ENCODE measurements at regions of chr3 and their contacts with region 1.

Region 1: DNA sequence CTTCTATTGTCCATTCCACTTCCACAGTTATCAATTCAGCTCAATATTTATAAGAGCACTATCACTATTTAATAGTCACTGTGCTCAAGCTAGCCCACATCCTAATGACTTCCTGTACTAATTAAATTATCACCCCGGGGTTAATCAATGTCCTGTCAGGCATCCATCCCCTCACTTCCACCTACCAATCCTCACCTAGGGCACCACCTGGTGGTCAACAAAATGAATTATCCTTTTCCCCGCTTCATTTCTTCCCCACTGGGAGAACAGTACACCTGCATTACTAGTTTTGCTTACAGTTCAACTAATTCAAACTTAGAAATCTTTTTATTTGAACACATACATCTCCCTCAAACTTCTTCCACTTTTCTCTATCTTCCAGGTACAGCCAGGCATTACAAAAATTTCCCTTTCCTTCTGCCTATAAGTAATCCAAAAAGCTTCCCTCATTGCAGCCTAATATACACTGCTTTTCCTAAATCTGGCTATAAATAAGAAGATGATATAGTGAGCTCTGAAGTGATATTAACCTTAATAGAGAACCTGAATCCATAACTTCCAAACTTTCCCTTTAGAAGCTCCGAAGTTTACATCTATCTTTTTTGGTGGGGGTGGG is 68.5 kb downstream of the TMCC1 start:
- DNase-seq: peak; percentile 44
- H3K4me3 Mint-ChIP-seq: no peak overlapping the region
- H3K27ac Mint-ChIP-seq: no peak overlapping the region
- H3K4me1 Mint-ChIP-seq: peaks cover 15% of the 10 kb centered on the region
- H3K27me3 Mint-ChIP-seq: no peaks in the 10 kb centered on the region

Region 2: GRCh38 chr3:129383292-129383860 is 441.7 kb before region 1 on chr3:
- CTCF ChIA-PET with region 1: interaction called, 3 read pairs
- POLR2A ChIA-PET with region 1: no interaction called
- intact Hi-C with region 1: loop called (anchors 5 kb)
- DNase-seq: peak; percentile 61
- H3K4me3 Mint-ChIP-seq: no peak overlapping the region
- H3K27ac Mint-ChIP-seq: no peak overlapping the region
- H3K4me1 Mint-ChIP-seq: no peaks in the 10 kb centered on the region
- H3K27me3 Mint-ChIP-seq: no peaks in the 10 kb centered on the region

Region 3: DNA sequence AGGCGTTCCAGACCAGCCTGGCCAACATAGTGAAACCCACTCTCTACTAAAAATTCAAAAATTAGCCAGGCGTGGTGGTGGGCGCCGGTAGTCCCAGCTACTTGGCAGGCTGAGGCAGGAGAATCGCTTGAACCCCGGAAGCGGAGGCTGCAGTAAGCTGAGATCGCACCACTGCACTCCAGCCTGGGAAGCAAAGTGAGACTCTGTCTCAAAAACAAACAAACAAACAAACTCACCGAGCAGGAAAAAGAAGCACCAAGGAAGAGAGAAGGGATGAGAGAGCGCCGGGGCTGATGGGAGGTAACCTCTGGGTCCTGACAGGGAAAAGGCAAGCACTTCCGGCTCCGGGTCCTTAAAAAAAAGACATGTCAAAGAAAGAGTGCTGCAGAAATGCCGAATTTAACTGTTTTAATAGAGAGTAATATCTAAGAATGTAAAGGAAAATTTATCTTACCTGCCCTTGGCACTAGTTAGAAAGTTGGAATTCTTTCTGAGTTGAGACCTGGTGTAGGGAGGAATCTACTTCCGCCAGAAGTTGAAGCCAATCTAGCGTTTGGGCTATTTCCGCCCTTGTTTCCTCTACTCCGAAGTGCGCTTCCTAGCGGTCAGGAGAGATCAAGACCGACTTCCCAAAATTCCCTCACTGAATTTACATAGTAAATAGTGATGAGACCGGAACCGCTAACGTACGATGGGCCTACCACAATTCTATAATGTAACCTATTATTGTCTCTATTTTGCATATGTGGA is 425.7 kb before region 1 on chr3:
- CTCF ChIA-PET with region 1: no interaction called
- POLR2A ChIA-PET with region 1: no interaction called
- intact Hi-C with region 1: loop called (anchors 5 kb)
- DNase-seq: peak; percentile 82
- H3K4me3 Mint-ChIP-seq: peak overlapping the region; percentile 97
- H3K27ac Mint-ChIP-seq: peak overlapping the region; percentile 99
- H3K4me1 Mint-ChIP-seq: peaks cover 31% of the 10 kb centered on the region
- H3K27me3 Mint-ChIP-seq: no peaks in the 10 kb centered on the region

Region 4: GRCh38 chr3:129490242-129491045 is 334.6 kb before region 1 on chr3:
- CTCF ChIA-PET with region 1: interaction called, 22 read pairs
- POLR2A ChIA-PET with region 1: no interaction called
- intact Hi-C with region 1: loop called (anchors 1 kb)
- DNase-seq: peak; percentile 65
- H3K4me3 Mint-ChIP-seq: no peak overlapping the region
- H3K27ac Mint-ChIP-seq: no peak overlapping the region
- H3K4me1 Mint-ChIP-seq: no peaks in the 10 kb centered on the region
- H3K27me3 Mint-ChIP-seq: no peaks in the 10 kb centered on the region

Region 5: DNA sequence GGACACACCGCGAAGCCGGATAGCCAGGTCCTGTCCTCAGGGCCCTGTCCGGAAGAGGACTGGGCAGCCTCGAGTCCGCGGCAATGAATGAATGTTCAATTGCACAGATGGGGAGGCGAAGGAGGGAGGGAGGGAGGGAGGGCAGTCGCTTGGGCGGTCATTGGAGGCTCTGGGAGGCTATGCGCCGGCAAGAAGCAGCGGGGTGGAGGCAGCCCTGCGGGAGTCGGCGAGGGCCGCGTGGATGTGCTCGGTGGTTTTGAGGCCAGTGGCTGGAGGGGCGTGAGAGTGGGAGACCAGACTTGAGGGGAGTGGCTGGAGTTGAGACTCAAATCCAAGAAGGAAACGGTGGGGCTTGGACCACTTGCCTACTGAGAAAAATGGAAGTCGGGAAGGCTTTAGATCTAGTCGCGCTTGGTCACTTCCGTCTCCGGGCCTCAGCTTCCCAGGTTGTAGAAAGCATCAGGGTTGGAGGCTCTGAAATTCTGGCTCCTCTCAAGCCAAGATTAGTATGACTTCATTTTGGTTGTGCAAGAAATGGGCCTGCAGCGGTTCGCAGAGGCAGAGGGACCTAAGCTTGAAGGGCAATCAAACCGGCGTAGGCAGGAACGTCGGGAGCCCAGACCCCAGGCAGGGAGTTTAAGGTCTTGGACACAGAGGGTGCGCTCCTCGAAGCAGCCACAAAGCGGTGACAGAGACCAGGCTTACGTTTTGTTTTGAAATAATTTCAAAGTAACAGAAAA is 197.4 kb before region 1 on chr3:
- CTCF ChIA-PET with region 1: interaction called, 56 read pairs
- POLR2A ChIA-PET with region 1: interaction called, 3 read pairs
- intact Hi-C with region 1: loop called (anchors 1 kb)
- DNase-seq: peak; percentile 79
- H3K4me3 Mint-ChIP-seq: peak overlapping the region; percentile 85
- H3K27ac Mint-ChIP-seq: peak overlapping the region; percentile 63
- H3K4me1 Mint-ChIP-seq: peaks cover 12% of the 10 kb centered on the region
- H3K27me3 Mint-ChIP-seq: no peaks in the 10 kb centered on the region

Region 6: GRCh38 chr3:129650256-129650872 is 174.7 kb before region 1 on chr3:
- CTCF ChIA-PET with region 1: interaction called, 38 read pairs
- POLR2A ChIA-PET with region 1: no interaction called
- intact Hi-C with region 1: loop called (anchors 1 kb)
- DNase-seq: peak; percentile 75
- H3K4me3 Mint-ChIP-seq: no peak overlapping the region
- H3K27ac Mint-ChIP-seq: no peak overlapping the region
- H3K4me1 Mint-ChIP-seq: no peaks in the 10 kb centered on the region
- H3K27me3 Mint-ChIP-seq: no peaks in the 10 kb centered on the region

Region 7: DNA sequence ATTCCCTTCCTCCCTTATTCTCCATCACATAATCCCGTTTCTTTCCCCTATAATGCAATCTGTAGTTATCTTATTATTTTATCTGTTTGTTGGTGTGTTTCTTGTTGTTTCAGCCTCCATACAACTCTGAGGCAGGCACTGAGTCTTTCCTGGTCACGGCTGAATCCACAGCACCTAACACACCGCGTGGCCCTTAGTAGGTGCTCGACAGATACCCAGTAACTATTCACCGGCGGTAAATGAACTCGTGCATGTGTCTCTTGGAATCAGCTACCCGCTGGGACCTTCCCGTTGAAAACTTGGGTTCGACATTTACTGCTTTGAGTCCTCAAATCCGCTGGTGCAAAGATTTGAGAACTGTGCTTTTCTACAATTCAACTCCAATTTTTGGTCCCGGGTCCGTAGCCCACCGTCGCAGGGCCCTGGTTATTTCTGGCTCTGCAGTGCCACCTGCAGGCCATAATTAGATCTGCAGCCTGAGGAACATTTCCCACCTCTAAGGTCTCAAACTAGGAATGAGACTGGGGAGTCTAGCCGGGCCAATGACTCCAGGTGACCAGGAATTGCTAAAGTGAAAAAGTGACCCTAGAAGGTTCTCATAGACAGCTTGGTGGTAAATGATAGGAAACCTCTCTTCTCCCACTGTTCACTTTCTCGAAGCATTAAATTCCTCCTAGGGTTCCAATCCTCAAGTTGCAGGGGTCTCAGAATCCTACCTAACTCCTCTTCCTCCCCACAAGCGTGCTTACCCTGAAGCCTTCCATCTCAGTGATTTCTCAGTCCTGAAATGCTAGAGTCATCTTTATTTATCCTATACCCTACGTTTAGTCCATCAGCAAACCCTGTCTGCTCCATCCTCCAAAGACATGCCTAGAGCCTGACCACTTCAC is 109.4 kb after region 1 on chr3:
- CTCF ChIA-PET with region 1: interaction called, 3 read pairs
- POLR2A ChIA-PET with region 1: no interaction called
- intact Hi-C with region 1: loop called (anchors 5 kb)
- DNase-seq: peak; percentile 31
- H3K4me3 Mint-ChIP-seq: no peak overlapping the region
- H3K27ac Mint-ChIP-seq: no peak overlapping the region
- H3K4me1 Mint-ChIP-seq: peaks cover 6% of the 10 kb centered on the region
- H3K27me3 Mint-ChIP-seq: peaks cover 4% of the 10 kb centered on the region

Measured in activated CD4-positive, alpha-beta memory T cell treated with anti-CD3 and anti-CD28 coated beads for 36 hours (primary cell).